SK-N-SH (cell line): ENCODE measurements at regions of chr7 and their contacts with region 1.

Region 1: DNA sequence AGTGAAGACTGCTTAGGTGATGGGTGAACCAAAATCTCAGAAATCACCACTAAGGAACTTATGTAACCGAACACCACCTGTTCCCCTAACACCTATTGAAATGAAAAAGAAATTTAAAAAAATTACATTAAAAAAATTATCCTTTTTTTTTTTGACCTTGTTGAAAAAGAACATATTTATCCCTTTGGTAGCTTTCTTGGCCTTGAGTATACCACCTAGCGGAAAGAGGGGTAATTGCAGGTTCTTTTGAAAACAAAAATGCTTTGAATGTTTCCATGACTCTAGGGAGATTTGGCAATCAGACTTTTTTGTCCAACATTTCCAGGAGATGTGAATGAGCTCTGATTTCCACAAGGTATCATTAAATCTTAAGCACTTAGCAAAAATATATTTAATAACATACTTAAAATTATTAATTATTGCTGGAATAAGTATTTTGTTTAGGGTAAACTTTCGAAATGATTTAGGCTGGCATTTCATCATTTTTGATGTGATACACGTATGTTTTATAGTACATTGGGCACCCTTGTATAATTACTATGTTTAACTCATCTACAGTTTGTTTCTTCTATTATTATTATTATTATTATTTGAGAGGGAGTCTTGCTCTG is 47.0 kb upstream of the ELMO1 start:
- DNase-seq: peak; percentile 63
- H3K4me3 ChIP-seq: no peak overlapping the region
- H3K27ac ChIP-seq: no peak overlapping the region
- H3K4me1 ChIP-seq: no peaks in the 10 kb centered on the region
- H3K27me3 ChIP-seq: no peaks in the 10 kb centered on the region
- CTCF ChIP-seq: peak; percentile 68
- EP300 ChIP-seq: no peak
- RAD21 ChIP-seq: peak; percentile 69

Region 2: GRCh38 chr7:37448636-37449361 is 46.9 kb before region 1 on chr7 and contains the start of gene ELMO1:
- CTCF ChIA-PET with region 1: interaction called, 31 read pairs
- POLR2A ChIA-PET with region 1: no interaction called
- DNase-seq: peak; percentile 94
- H3K4me3 ChIP-seq: peak within 1 kb of the TSS in 1 of 2 experiments; percentile 55; a peak in 2 of 4 replicates
- H3K27ac ChIP-seq: peak within 1 kb of the TSS in 1 of 2 experiments; percentile 73; a peak in 2 of 4 replicates
- H3K4me1 ChIP-seq: peaks cover 0 to 13% of the 10 kb centered on the region in 2 experiments; a peak in 2 of 4 replicates
- H3K27me3 ChIP-seq: no peaks in the 10 kb centered on the region
- CTCF ChIP-seq: no peak
- EP300 ChIP-seq: no peak; a peak in 1 of 4 replicates
- RAD21 ChIP-seq: peak; percentile 52
- polyA plus RNA-seq, gene ELMO1: 0.64 and 2.8 TPM in 2 replicates

Region 3: DNA sequence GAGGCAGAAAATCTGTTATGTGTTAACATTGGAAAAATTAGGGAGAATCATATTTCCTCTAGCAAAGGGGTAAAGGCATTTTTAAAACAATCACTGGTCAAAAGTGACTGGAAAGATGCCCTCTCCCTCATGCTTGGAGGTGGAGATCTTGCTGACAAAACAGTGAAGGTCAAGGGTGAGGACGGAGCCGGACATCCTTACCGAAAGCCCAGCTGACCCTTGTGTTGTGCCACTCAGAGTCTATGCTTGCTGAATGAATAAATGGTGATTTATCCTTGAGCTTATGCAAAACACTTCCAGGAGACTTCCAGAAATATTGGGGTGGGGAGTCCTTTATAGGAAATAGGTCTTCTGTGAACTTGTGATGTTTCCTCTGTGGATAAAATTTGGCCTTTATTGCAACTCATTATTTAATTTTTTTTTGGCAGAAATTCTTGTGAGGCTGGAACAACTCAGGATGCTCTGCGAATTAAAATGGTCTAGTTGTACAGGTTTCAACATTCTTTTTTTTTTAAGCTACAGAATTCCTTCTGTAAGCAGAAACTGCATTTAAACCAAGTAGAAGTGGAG is 18.7 kb before region 1 on chr7:
- CTCF ChIA-PET with region 1: interaction called, 55 read pairs
- POLR2A ChIA-PET with region 1: no interaction called
- DNase-seq: no peak
- H3K4me3 ChIP-seq: no peak overlapping the region
- H3K27ac ChIP-seq: no peak overlapping the region
- H3K4me1 ChIP-seq: peaks cover 0 to 15% of the 10 kb centered on the region in 2 experiments; a peak in 2 of 4 replicates
- H3K27me3 ChIP-seq: no peaks in the 10 kb centered on the region
- CTCF ChIP-seq: no peak
- EP300 ChIP-seq: no peak
- RAD21 ChIP-seq: no peak

Region 4: GRCh38 chr7:37510043-37510634 is 14.5 kb after region 1 on chr7:
- CTCF ChIA-PET with region 1: interaction called, 82 read pairs
- POLR2A ChIA-PET with region 1: interaction called, 3 read pairs
- DNase-seq: peak; percentile 40
- H3K4me3 ChIP-seq: no peak overlapping the region
- H3K27ac ChIP-seq: no peak overlapping the region
- H3K4me1 ChIP-seq: no peaks in the 10 kb centered on the region; a peak in 1 of 4 replicates
- H3K27me3 ChIP-seq: no peaks in the 10 kb centered on the region
- CTCF ChIP-seq: peak; percentile 34
- EP300 ChIP-seq: no peak
- RAD21 ChIP-seq: peak; percentile 80